HepG2 (cell line): ENCODE measurements at regions of chr2 and their contacts with region 1.

Region 1: GRCh38 chr2:47339745-47340541 is 63.0 kb upstream of the MSH2 start:
- DNase-seq: peak; percentile 58
- ATAC-seq: no peak
- H3K4me3 ChIP-seq: no peak overlapping the region
- H3K27ac ChIP-seq: peak overlapping the region; percentile 28
- H3K4me1 ChIP-seq: peaks cover 60% of the 10 kb centered on the region
- H3K27me3 ChIP-seq: no peaks in the 10 kb centered on the region
- CTCF ChIP-seq: no peak
- EP300 ChIP-seq: no peak
- POLR2A ChIP-seq: no peak
- RAD21 ChIP-seq: no peak

Region 2: GRCh38 chr2:46793423-46794416 is 546.2 kb before region 1 on chr2:
- CTCF ChIA-PET with region 1: no interaction called
- POLR2A ChIA-PET with region 1: no interaction called
- in situ Hi-C with region 1: no loop called
- intact Hi-C with region 1: no loop called
- DNase-seq: peak; percentile 33
- ATAC-seq: peak; percentile 96
- H3K4me3 ChIP-seq: peak overlapping the region in 1 of 3 experiments; percentile 42; a peak in 2 of 6 replicates
- H3K27ac ChIP-seq: no peak overlapping the region
- H3K4me1 ChIP-seq: peaks cover 10% of the 10 kb centered on the region
- H3K27me3 ChIP-seq: no peaks in the 10 kb centered on the region
- CTCF ChIP-seq: no peak
- EP300 ChIP-seq: no peak
- POLR2A ChIP-seq: no peak
- RAD21 ChIP-seq: no peak

Region 3: GRCh38 chr2:47237375-47237821 is 102.5 kb before region 1 on chr2:
- CTCF ChIA-PET with region 1: no interaction called
- POLR2A ChIA-PET with region 1: no interaction called
- in situ Hi-C with region 1: no loop called
- intact Hi-C with region 1: no loop called
- DNase-seq: no peak
- ATAC-seq: no peak
- H3K4me3 ChIP-seq: no peak overlapping the region
- H3K27ac ChIP-seq: no peak overlapping the region
- H3K4me1 ChIP-seq: peaks cover 29% of the 10 kb centered on the region
- H3K27me3 ChIP-seq: peaks cover 9 to 63% of the 10 kb centered on the region in 2 experiments; a peak in 4 of 5 replicates
- CTCF ChIP-seq: no peak
- EP300 ChIP-seq: no peak
- POLR2A ChIP-seq: no peak
- RAD21 ChIP-seq: no peak

Region 4: DNA sequence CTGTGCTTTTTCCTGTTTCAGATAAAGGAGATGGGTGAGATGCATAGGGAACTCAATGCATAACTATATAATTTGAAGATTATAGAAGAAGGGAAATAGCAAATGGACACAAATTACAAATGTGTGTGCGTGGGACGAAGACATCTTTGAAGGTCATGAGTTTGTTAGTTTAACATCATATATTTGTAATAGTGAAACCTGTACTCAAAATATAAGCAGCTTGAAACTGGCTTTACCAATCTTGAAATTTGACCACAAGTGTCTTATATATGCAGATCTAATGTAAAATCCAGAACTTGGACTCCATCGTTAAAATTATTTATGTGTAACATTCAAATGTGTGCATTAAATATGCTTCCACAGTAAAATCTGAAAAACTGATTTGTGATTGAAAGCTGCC is 46.6 kb after region 1 on chr2:
- CTCF ChIA-PET with region 1: interaction called, 73 read pairs
- POLR2A ChIA-PET with region 1: interaction called, 66 read pairs
- in situ Hi-C with region 1: loop called (anchors 5 kb)
- intact Hi-C with region 1: loop called (anchors 1 kb)
- DNase-seq: no peak
- ATAC-seq: no peak
- H3K4me3 ChIP-seq: no peak overlapping the region
- H3K27ac ChIP-seq: no peak overlapping the region
- H3K4me1 ChIP-seq: peaks cover 10% of the 10 kb centered on the region
- H3K27me3 ChIP-seq: no peaks in the 10 kb centered on the region
- CTCF ChIP-seq: no peak
- EP300 ChIP-seq: no peak
- POLR2A ChIP-seq: no peak
- RAD21 ChIP-seq: no peak

Region 5: DNA sequence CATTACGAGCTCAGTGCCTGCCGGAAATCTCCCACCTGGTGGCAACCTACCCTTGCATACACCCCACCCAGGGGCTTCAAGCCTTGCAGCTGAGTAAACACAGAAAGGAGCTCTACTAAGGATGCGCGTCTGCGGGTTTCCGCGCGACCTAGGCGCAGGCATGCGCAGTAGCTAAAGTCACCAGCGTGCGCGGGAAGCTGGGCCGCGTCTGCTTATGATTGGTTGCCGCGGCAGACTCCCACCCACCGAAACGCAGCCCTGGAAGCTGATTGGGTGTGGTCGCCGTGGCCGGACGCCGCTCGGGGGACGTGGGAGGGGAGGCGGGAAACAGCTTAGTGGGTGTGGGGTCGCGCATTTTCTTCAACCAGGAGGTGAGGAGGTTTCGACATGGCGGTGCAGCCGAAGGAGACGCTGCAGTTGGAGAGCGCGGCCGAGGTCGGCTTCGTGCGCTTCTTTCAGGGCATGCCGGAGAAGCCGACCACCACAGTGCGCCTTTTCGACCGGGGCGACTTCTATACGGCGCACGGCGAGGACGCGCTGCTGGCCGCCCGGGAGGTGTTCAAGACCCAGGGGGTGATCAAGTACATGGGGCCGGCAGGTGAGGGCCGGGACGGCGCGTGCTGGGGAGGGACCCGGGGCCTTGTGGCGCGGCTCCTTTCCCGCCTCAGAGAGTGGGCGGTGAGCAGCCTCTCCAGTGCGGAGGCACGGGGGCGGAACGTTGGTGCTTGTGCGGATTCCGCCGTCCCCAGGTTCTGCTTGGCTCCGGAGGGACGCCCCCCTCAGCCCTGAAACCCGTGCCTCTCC is 63.1 kb after region 1 on chr2 and contains the start of gene MSH2:
- CTCF ChIA-PET with region 1: no interaction called
- POLR2A ChIA-PET with region 1: interaction called, 26 read pairs
- in situ Hi-C with region 1: no loop called
- intact Hi-C with region 1: no loop called
- DNase-seq: peak; percentile 88
- ATAC-seq: peak; percentile 95
- H3K4me3 ChIP-seq: peak within 1 kb of the TSS; percentile 72 to 87 (median 76)
- H3K27ac ChIP-seq: peak within 1 kb of the TSS; percentile 75
- H3K4me1 ChIP-seq: peaks cover 65% of the 10 kb centered on the region
- H3K27me3 ChIP-seq: no peaks in the 10 kb centered on the region; a peak in 1 of 5 replicates
- CTCF ChIP-seq: peak; percentile 17; the same call in 1 of the 2 replicates
- EP300 ChIP-seq: 0 out of 4 replicates have a peak, but pooled peaks of 1 of the 2 experiments have one; percentile 3
- POLR2A ChIP-seq: peak; percentile 58 to 96
- RAD21 ChIP-seq: no peak
- total RNA-seq, gene MSH2: 76.3 and 125 TPM in 2 replicates